Activated CD4-positive, alpha-beta memory T cell treated with anti-CD3 and anti-CD28 coated beads for 36 hours (primary cell): ENCODE measurements at regions of chr1 and their contacts with region 1.

Region 1: GRCh38 chr1:167803358-167804207 is 81.8 kb downstream of the MPZL1 start:
- DNase-seq: peak; percentile 95
- H3K4me3 Mint-ChIP-seq: peak overlapping the region; percentile 57
- H3K27ac Mint-ChIP-seq: peak overlapping the region; percentile 90
- H3K4me1 Mint-ChIP-seq: peaks cover 26% of the 10 kb centered on the region
- H3K27me3 Mint-ChIP-seq: no peaks in the 10 kb centered on the region

Region 2: DNA sequence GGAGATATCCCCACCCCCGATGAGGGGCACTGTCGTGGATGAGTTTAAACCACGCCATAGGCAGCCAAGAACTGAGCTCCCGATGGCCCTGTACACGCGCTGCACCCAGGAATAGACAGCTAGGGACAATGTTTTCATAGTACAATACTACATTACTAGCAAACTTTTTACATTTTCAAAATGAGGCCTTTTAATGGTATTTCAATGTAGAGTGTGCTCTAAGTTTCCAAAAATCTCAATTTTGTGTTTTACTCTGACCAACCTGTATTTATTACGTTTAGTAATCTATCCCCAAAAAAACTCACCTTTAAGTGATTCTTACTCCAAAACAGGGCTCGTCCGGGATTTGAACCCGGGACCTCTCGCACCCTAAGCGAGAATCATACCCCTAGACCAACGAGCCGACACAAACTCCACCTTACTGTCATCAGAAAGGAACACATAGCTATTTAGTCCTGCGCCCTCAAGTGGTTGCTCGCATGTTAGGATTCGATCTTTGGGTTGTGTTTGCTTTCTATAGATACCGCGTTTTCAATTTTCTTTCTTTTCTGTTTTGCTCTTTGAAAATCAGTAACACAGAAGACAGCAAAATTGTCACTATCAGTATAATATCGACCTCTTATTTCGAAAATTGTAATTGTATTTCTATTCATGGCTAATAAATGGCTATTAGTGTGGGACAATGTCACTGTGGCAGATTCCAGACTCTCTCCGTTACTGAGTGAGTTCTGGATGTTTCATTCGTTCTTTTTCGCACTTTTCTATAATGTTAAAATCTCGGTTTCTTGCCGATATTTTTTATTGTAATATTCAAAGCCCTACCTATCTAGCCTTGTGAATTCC is 88.2 kb before region 1 on chr1:
- CTCF ChIA-PET with region 1: interaction called, 6 read pairs
- POLR2A ChIA-PET with region 1: interaction called, 8 read pairs
- intact Hi-C with region 1: loop called (anchors 1 kb)
- DNase-seq: peak; percentile 93
- H3K4me3 Mint-ChIP-seq: peak overlapping the region; percentile 80
- H3K27ac Mint-ChIP-seq: peak overlapping the region; percentile 93
- H3K4me1 Mint-ChIP-seq: peaks cover 35% of the 10 kb centered on the region
- H3K27me3 Mint-ChIP-seq: peaks cover 7% of the 10 kb centered on the region

Region 3: GRCh38 chr1:167752219-167752985 is 51.2 kb before region 1 on chr1:
- CTCF ChIA-PET with region 1: interaction called, 3 read pairs
- POLR2A ChIA-PET with region 1: no interaction called
- intact Hi-C with region 1: loop called (anchors 1 kb)
- DNase-seq: no peak
- H3K4me3 Mint-ChIP-seq: no peak overlapping the region
- H3K27ac Mint-ChIP-seq: peak overlapping the region; percentile 35
- H3K4me1 Mint-ChIP-seq: peaks cover 14% of the 10 kb centered on the region
- H3K27me3 Mint-ChIP-seq: no peaks in the 10 kb centered on the region